T-cell (primary cell): ENCODE measurements at regions of chr12 and their contacts with region 1.

Region 1: GRCh38 chr12:120012067-120012621 is 23.1 kb downstream of the BICDL1 start:
- DNase-seq: peak in 34 of 35 experiments; percentile 34 to 96 (median 70)
- ATAC-seq: peak; percentile 28 to 71 (median 42)
- H3K4me3 ChIP-seq: peak overlapping the region in 1 of 2 donors; percentile 16
- H3K4me3 Mint-ChIP-seq: peak overlapping the region; percentile 47 to 77 (median 71)
- H3K27ac ChIP-seq: peak overlapping the region; percentile 98
- H3K27ac Mint-ChIP-seq: peak overlapping the region; percentile 90 to 93
- H3K4me1 ChIP-seq: peaks cover 62 to 65% of the 10 kb centered on the region in 2 experiments
- H3K4me1 Mint-ChIP-seq: peaks cover 86 to 93% (median 91%) of the 10 kb centered on the region in 3 donors
- H3K27me3 ChIP-seq: no peaks in the 10 kb centered on the region
- H3K27me3 Mint-ChIP-seq: no peaks in the 10 kb centered on the region

Region 2: DNA sequence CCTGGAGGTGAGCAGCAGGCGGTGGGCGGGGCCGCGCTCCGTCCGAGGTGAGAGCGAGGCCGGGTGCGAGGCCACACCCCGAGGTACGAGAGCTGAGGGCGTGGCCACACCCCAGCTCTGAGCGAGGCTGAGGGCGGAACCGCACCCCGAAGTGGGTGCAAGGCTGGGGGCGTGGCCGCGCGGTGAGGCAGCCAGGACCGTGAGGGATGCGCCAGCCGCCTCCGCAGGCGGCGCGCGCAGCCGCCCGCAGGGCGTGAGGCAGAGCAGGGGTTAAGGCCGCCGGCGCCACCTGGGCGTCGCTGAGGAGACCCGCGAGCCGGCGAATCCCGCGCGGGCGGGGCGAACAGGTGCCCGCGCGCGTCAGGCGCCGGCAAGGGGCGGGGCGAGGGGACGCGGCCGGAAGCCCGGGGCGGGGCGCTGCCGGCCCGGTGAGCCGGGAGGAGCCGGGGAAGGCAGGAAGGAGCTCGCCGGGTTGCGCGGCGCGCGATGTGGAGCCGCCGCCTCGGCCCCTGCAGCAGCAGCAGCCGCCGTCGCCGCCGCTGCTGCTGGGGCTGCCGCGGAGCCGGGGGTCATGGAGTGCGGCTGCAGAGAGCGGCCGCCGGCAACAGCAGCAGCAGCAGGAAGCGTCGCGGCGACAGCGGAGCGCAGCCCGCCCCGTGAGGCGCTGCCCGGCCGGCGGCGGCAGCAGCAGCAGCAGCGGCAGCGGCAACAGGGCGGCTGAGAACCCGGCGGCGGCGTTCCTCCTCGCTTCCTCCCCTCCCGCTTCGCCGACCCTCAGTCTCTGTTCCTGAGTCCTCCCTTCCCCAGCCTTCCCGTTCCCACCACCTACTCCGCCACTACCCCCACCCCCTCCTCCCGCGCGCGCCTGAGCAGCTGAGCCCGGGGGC is 23.1 kb before region 1 on chr12 and contains the start of gene BICDL1:
- CTCF ChIA-PET with region 1: interaction called, 8 to 22 read pairs
- POLR2A ChIA-PET with region 1: interaction called, 26 to 63 read pairs
- DNase-seq: peak; percentile 92 to 99 (median 97)
- ATAC-seq: peak; percentile 83 to 88 (median 85)
- H3K4me3 ChIP-seq: peak within 1 kb of the TSS; percentile 53 to 69
- H3K4me3 Mint-ChIP-seq: peak within 1 kb of the TSS; percentile 82 to 88 (median 84)
- H3K27ac ChIP-seq: peak within 1 kb of the TSS; percentile 86
- H3K27ac Mint-ChIP-seq: peak within 1 kb of the TSS; percentile 95 to 96
- H3K4me1 ChIP-seq: peaks cover 15 to 17% of the 10 kb centered on the region in 2 experiments
- H3K4me1 Mint-ChIP-seq: peaks cover 34 to 42% (median 42%) of the 10 kb centered on the region in 3 donors
- H3K27me3 ChIP-seq: no peaks in the 10 kb centered on the region
- H3K27me3 Mint-ChIP-seq: no peaks in the 10 kb centered on the region
- total RNA-seq, gene BICDL1: 134 to 176 (median 158) TPM

Region 3: DNA sequence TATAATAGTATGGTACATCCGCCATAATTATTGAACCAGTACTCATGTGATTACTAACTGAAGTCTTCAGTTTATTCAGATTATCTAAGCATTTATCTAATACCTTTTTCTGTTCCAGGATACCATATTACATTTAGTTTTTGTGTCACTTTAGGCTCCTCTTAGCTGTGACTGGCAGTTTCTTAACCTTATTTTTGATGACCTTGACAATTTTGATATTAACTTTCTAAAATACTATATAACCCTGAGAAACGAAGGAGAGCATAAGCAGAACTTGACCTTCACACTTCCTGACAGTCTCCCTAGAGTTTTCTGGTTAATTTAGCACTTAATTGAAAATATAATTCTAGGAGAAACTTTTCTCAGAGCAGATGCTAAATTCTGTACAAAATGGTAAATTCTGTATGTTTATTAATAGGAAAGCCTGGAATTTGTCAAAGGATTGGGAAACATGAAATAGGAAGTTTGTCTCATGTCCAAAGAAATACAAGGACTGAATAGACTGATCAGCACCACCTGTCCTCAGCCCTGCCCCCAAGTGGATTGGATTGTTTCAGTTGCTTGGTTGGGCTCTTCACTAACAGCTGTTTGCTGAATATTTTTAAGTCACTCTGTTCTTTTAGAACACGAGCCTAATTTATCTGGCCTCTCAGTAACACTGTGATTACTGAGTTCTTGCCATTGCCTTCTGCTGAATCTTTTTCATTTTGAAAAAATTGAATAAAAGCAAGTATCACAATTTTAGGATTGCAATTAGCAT is 17.1 kb before region 1 on chr12:
- CTCF ChIA-PET with region 1: interaction called, 8 to 22 read pairs
- POLR2A ChIA-PET with region 1: interaction called, 26 to 63 read pairs
- DNase-seq: no peak
- ATAC-seq: no peak
- H3K4me3 ChIP-seq: no peak overlapping the region
- H3K4me3 Mint-ChIP-seq: no peak overlapping the region
- H3K27ac ChIP-seq: no peak overlapping the region
- H3K27ac Mint-ChIP-seq: no peak overlapping the region
- H3K4me1 ChIP-seq: peaks cover 7 to 9% of the 10 kb centered on the region in 2 experiments
- H3K4me1 Mint-ChIP-seq: peaks cover 31 to 60% (median 53%) of the 10 kb centered on the region in 3 donors
- H3K27me3 ChIP-seq: no peaks in the 10 kb centered on the region
- H3K27me3 Mint-ChIP-seq: no peaks in the 10 kb centered on the region

Region 4: GRCh38 chr12:120086801-120087621 is 74.9 kb after region 1 on chr12:
- CTCF ChIA-PET with region 1: interaction called, 10 to 12 read pairs
- POLR2A ChIA-PET with region 1: interaction called, 3 to 8 read pairs
- DNase-seq: peak; percentile 98 to 100 (median 99)
- ATAC-seq: peak; percentile 95 to 97 (median 96)
- H3K4me3 ChIP-seq: peak overlapping the region; percentile 47 to 50
- H3K4me3 Mint-ChIP-seq: peak overlapping the region; percentile 66 to 74 (median 67)
- H3K27ac ChIP-seq: peak overlapping the region; percentile 72
- H3K27ac Mint-ChIP-seq: peak overlapping the region; percentile 83 to 86
- H3K4me1 ChIP-seq: peaks cover 6 to 13% of the 10 kb centered on the region in 2 experiments
- H3K4me1 Mint-ChIP-seq: peaks cover 14 to 32% (median 17%) of the 10 kb centered on the region in 3 donors
- H3K27me3 ChIP-seq: no peaks in the 10 kb centered on the region
- H3K27me3 Mint-ChIP-seq: no peaks in the 10 kb centered on the region

Region 5: GRCh38 chr12:120791669-120792176 is 779.6 kb after region 1 on chr12:
- CTCF ChIA-PET with region 1: no interaction called
- POLR2A ChIA-PET with region 1: interaction called in 1 of 2 experiments, 10 read pairs
- DNase-seq: no peak
- ATAC-seq: no peak
- H3K4me3 ChIP-seq: no peak overlapping the region
- H3K4me3 Mint-ChIP-seq: no peak overlapping the region
- H3K27ac ChIP-seq: no peak overlapping the region
- H3K27ac Mint-ChIP-seq: peak overlapping the region; percentile 1 to 4
- H3K4me1 ChIP-seq: no peaks in the 10 kb centered on the region
- H3K4me1 Mint-ChIP-seq: peaks cover 22 to 46% (median 27%) of the 10 kb centered on the region in 3 donors
- H3K27me3 ChIP-seq: no peaks in the 10 kb centered on the region
- H3K27me3 Mint-ChIP-seq: no peaks in the 10 kb centered on the region